ENCODE measurements at regions of chr5 and their contacts with region 1.

Region 1: GRCh38 chr5:150340614-150341255 is 16.8 kb upstream of the TCOF1 start:
- DNase-seq: no peak
- H3K4me3 ChIP-seq: no peak overlapping the region
- H3K27ac ChIP-seq: no peak overlapping the region
- H3K4me1 ChIP-seq: peaks cover 8% of the 10 kb centered on the region
- H3K27me3 ChIP-seq: no peaks in the 10 kb centered on the region
- CTCF ChIP-seq: no peak

Region 2: DNA sequence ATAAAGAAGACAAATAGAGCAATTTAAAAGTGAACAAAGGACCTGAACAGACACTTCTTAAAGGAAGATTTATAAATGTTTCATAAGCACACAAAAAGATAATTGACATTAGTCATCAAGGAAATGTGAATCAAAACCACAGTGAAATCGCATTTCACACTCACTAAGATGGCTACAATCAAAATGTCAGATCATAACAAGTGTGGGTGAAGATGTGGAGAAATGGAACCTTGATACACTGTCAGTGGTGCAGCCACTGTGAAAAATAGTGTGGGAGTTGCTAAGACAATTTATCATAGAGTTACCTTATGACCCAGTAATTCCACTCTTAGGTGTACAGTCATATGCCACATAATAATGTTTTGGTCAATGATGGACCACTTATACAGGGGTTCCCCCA is 1631.9 kb before region 1 on chr5:
- CTCF ChIA-PET with region 1: no interaction called
- dilution Hi-C with region 1: no loop called
- in situ Hi-C with region 1: no loop called
- intact Hi-C with region 1: no loop called
- DNase-seq: no peak
- H3K4me3 ChIP-seq: no peak overlapping the region
- H3K27ac ChIP-seq: no peak overlapping the region
- H3K4me1 ChIP-seq: no peaks in the 10 kb centered on the region
- H3K27me3 ChIP-seq: no peaks in the 10 kb centered on the region
- CTCF ChIP-seq: no peak

Region 3: GRCh38 chr5:150272526-150272925 is 68.2 kb before region 1 on chr5:
- CTCF ChIA-PET with region 1: no interaction called
- dilution Hi-C with region 1: no loop called
- in situ Hi-C with region 1: loop called in 1 of 2 experiments (anchors 10 kb)
- intact Hi-C with region 1: no loop called
- DNase-seq: peak; percentile 46
- H3K4me3 ChIP-seq: no peak overlapping the region
- H3K27ac ChIP-seq: no peak overlapping the region
- H3K4me1 ChIP-seq: peaks cover 5% of the 10 kb centered on the region
- H3K27me3 ChIP-seq: no peaks in the 10 kb centered on the region
- CTCF ChIP-seq: peak; percentile 53 to 78

Region 4: DNA sequence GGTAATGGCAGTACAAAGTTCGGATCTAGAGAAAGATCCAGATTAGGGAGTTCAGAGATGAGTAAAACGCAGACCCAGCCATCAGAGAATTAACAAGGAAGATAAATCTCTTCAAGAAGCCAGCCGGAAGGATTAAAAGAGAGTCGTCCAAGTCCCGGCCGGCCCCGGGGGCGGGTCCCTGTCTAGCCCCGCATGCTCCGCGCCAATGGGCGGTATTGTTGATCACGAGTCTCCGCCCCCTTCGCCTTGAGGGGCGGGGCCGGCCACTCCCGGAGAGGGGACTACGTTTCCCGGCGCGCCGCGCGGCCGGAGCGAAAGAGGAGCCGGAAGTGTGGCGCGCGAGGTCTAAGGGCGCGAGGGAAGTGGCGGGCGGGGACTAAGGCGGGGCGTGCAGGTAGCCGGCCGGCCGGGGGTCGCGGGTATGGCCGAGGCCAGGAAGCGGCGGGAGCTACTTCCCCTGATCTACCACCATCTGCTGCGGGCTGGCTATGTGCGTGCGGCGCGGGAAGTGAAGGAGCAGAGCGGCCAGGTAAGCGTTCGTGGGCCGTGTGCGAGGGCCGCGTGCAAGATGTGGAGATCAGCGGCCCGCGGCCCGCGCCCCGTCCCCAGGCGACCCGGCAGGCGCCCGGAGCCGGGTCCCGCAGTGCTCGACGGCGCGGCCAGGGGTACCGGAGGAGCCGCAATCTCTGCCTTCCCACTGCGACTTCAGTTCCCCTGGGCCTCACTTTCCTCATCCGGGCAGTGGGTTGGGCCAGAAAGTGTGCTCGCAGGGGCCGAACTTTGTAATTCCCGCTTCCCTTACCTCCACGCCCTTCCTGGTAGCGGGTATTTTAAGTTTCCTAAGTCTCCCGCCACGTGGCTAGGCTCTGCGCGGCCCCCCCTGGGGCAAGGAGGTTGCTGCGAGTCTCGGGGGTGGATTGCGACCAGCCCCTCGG is 16.9 kb after region 1 on chr5 and contains the start of gene TCOF1:
- CTCF ChIA-PET with region 1: no interaction called
- dilution Hi-C with region 1: no loop called
- in situ Hi-C with region 1: no loop called
- intact Hi-C with region 1: no loop called
- DNase-seq: peak; percentile 96
- H3K4me3 ChIP-seq: peak within 1 kb of the TSS; percentile 83 to 88 (median 85)
- H3K27ac ChIP-seq: peak within 1 kb of the TSS; percentile 83
- H3K4me1 ChIP-seq: peaks cover 9% of the 10 kb centered on the region
- H3K27me3 ChIP-seq: no peaks in the 10 kb centered on the region
- CTCF ChIP-seq: no peak
- total RNA-seq, gene TCOF1: 17.7 to 70.4 TPM